ENCODE measurements at regions of chr11 and their contacts with region 1.

Region 1: GRCh38 chr11:31107062-31107461 is 262.5 kb downstream of the DCDC1 start:
- DNase-seq: peak; percentile 39 to 58 (median 46)
- ATAC-seq: peak; percentile 76
- H3K4me3 ChIP-seq: no peak overlapping the region
- H3K27ac ChIP-seq: no peak overlapping the region
- H3K4me1 ChIP-seq: no peaks in the 10 kb centered on the region
- H3K27me3 ChIP-seq: no peaks in the 10 kb centered on the region
- CTCF ChIP-seq: peak; percentile 39 to 63 (median 55); a peak in 5 of 6 replicates
- EP300 ChIP-seq: no peak
- POLR2A ChIP-seq: no peak
- RAD21 ChIP-seq: peak; percentile 68 to 77

Region 2: GRCh38 chr11:30855383-30856006 is 251.6 kb before region 1 on chr11:
- CTCF ChIA-PET with region 1: no interaction called
- POLR2A ChIA-PET with region 1: no interaction called
- in situ Hi-C with region 1: no loop called
- intact Hi-C with region 1: no loop called
- DNase-seq: no peak
- ATAC-seq: no peak
- H3K4me3 ChIP-seq: no peak overlapping the region
- H3K27ac ChIP-seq: no peak overlapping the region
- H3K4me1 ChIP-seq: no peaks in the 10 kb centered on the region
- H3K27me3 ChIP-seq: no peaks in the 10 kb centered on the region
- CTCF ChIP-seq: 0 out of 6 replicates have a peak, but pooled peaks of 1 of the 3 experiments have one; percentile 19
- EP300 ChIP-seq: no peak
- POLR2A ChIP-seq: no peak
- RAD21 ChIP-seq: peak in 1 of 2 experiments; percentile 39; a peak in 2 of 4 replicates

Region 3: DNA sequence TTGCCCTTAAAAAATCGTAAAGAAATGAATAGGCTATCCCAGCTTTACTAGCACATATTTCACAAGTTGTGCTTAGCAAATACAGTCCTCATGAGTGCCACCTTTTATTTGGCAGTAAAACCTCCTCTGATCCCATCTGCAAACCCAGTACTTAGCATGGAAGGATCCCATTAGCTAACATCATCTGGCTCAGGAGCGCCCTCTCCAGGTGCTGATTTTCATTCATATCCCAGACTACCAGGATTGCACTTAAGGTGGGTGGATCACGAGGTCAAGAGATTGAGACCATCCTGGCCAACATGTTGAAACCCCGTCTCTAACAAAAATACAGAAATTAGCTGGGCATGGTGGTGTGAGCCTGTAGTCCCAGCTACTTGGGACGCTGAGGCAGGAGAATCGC is 780.1 kb after region 1 on chr11:
- CTCF ChIA-PET with region 1: no interaction called
- POLR2A ChIA-PET with region 1: no interaction called
- in situ Hi-C with region 1: loop called (anchors 25 kb)
- intact Hi-C with region 1: loop called (anchors 10 kb)
- DNase-seq: peak; percentile 47 to 54 (median 51)
- ATAC-seq: peak; percentile 87
- H3K4me3 ChIP-seq: no peak overlapping the region
- H3K27ac ChIP-seq: no peak overlapping the region
- H3K4me1 ChIP-seq: no peaks in the 10 kb centered on the region
- H3K27me3 ChIP-seq: peaks cover 3 to 8% of the 10 kb centered on the region in 2 experiments; a peak in 4 of 5 replicates
- CTCF ChIP-seq: peak; percentile 49 to 55 (median 50)
- EP300 ChIP-seq: no peak
- POLR2A ChIP-seq: no peak
- RAD21 ChIP-seq: peak in 1 of 2 experiments; percentile 50; a peak in 2 of 4 replicates

Region 4: DNA sequence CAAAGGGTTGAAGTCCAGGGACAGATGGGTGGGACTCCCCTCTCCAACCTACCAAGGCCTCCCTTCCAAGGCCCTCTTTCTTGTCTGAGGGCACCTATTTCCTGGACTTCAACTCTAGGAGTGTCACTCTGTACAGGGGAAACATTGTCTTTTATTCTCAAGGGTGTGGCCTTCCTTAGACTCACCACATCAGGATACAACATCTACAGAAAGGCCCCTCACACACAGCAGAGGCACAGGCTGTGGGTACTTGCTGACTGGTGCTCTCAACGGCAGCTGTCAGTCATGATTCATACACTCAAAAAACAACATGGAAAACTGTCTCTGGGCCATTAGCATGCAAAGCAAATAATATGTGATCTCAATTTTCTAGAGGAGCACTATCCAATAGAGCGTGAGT is 1061.9 kb after region 1 on chr11:
- CTCF ChIA-PET with region 1: no interaction called
- POLR2A ChIA-PET with region 1: no interaction called
- in situ Hi-C with region 1: loop called (anchors 10 kb)
- intact Hi-C with region 1: loop called (anchors 2 kb)
- DNase-seq: no peak
- ATAC-seq: no peak
- H3K4me3 ChIP-seq: no peak overlapping the region
- H3K27ac ChIP-seq: no peak overlapping the region
- H3K4me1 ChIP-seq: no peaks in the 10 kb centered on the region
- H3K27me3 ChIP-seq: peaks cover 2 to 16% of the 10 kb centered on the region in 2 experiments
- CTCF ChIP-seq: no peak
- EP300 ChIP-seq: no peak
- POLR2A ChIP-seq: no peak
- RAD21 ChIP-seq: no peak